HepG2 (cell line): ENCODE measurements at regions of chr12 and their contacts with region 1.

Region 1: DNA sequence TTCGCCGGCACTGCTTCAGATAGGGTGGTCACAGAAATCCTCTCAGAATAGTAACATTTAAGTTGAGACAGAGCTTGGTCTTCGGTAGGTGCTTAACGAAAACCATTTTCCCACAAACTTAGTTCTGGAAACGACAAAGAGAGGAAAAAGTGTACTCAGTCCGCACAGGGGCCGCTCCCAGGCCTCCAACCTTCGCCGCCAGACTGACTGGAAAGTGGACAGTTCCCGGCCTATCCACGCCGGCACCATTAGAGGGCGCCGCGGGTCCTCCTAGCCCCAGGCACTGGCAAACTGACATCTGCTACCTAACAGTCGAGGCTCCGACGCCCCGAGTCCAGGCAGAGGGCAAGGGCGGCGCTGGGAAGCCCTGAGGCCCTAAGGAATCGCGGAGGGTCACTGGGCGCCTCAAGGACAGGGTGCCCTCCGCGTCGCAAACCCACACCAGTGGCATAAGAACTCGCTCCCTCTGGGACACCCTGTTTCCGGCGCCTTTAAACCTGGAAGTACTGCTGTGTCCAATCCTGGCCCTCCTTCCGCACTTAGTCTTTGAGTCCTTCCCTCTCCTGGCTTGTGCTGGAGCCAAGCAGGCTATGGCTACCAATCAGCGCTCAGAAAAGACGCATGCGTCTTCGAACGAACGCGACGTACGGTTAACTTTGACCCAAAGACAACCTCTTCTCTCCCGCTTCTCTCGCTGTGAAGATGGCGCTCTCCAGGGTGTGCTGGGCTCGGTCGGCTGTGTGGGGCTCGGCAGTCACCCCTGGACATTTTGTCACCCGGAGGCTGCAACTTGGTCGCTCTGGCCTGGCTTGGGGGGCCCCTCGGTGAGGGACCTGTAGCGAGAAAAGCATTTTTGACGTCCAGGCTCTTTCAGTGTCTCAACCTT is at the start of gene LETMD1:
- DNase-seq: peak; percentile 98
- ATAC-seq: peak; percentile 99
- H3K4me3 ChIP-seq: peak within 1 kb of the TSS; percentile 75 to 86 (median 81)
- H3K27ac ChIP-seq: peak within 1 kb of the TSS; percentile 94
- H3K4me1 ChIP-seq: peaks cover 22% of the 10 kb centered on the region
- H3K27me3 ChIP-seq: no peaks in the 10 kb centered on the region; a peak in 1 of 5 replicates
- CTCF ChIP-seq: peak; percentile 97
- EP300 ChIP-seq: peak in 1 of 2 experiments; percentile 5; a peak in 1 of 4 replicates
- POLR2A ChIP-seq: peak; percentile 88 to 89
- RAD21 ChIP-seq: peak; percentile 96
- total RNA-seq, gene LETMD1: 31.3 and 43.3 TPM in 2 replicates

Region 2: GRCh38 chr12:51172515-51173431 is 124.9 kb after region 1 on chr12 and contains the start of gene TFCP2:
- CTCF ChIA-PET with region 1: no interaction called
- POLR2A ChIA-PET with region 1: no interaction called
- in situ Hi-C with region 1: no loop called
- intact Hi-C with region 1: no loop called
- DNase-seq: peak; percentile 93
- ATAC-seq: peak; percentile 92
- H3K4me3 ChIP-seq: peak within 1 kb of the TSS; percentile 59 to 96 (median 94)
- H3K27ac ChIP-seq: peak within 1 kb of the TSS; percentile 99
- H3K4me1 ChIP-seq: peaks cover 26% of the 10 kb centered on the region
- H3K27me3 ChIP-seq: no peaks in the 10 kb centered on the region
- CTCF ChIP-seq: 0 out of 2 replicates have a peak, but pooled peaks have one; percentile 10
- EP300 ChIP-seq: no peak
- POLR2A ChIP-seq: peak; percentile 68 to 87
- RAD21 ChIP-seq: no peak
- total RNA-seq, gene TFCP2: 10.0 and 17.4 TPM in 2 replicates

Region 3: GRCh38 chr12:51246254-51246853 is 198.5 kb after region 1 on chr12:
- CTCF ChIA-PET with region 1: no interaction called
- POLR2A ChIA-PET with region 1: no interaction called
- in situ Hi-C with region 1: no loop called
- intact Hi-C with region 1: loop called (anchors 10 kb)
- DNase-seq: no peak
- ATAC-seq: peak; percentile 62
- H3K4me3 ChIP-seq: no peak overlapping the region
- H3K27ac ChIP-seq: peak overlapping the region; percentile 15
- H3K4me1 ChIP-seq: peaks cover 23% of the 10 kb centered on the region
- H3K27me3 ChIP-seq: no peaks in the 10 kb centered on the region
- CTCF ChIP-seq: peak; percentile 57
- EP300 ChIP-seq: no peak
- POLR2A ChIP-seq: no peak
- RAD21 ChIP-seq: no peak

Region 4: GRCh38 chr12:51341259-51342007 is 293.5 kb after region 1 on chr12:
- CTCF ChIA-PET with region 1: interaction called, 6 read pairs
- POLR2A ChIA-PET with region 1: interaction called, 3 read pairs
- in situ Hi-C with region 1: no loop called
- intact Hi-C with region 1: loop called (anchors 1 kb)
- DNase-seq: peak; percentile 47
- ATAC-seq: peak; percentile 85
- H3K4me3 ChIP-seq: peak overlapping the region in 2 of 3 experiments; percentile 36 to 61; a peak in 4 of 6 replicates
- H3K27ac ChIP-seq: no peak overlapping the region
- H3K4me1 ChIP-seq: peaks cover 9% of the 10 kb centered on the region; the same call in 1 of the 2 replicates
- H3K27me3 ChIP-seq: no peaks in the 10 kb centered on the region
- CTCF ChIP-seq: peak; percentile 92
- EP300 ChIP-seq: no peak
- POLR2A ChIP-seq: no peak
- RAD21 ChIP-seq: peak; percentile 77